Activated CD4-positive, alpha-beta T cell treated with anti-CD3 and anti-CD28 coated beads for 36 hours (primary cell): ENCODE measurements at regions of chr11 and their contacts with region 1.

Region 1: DNA sequence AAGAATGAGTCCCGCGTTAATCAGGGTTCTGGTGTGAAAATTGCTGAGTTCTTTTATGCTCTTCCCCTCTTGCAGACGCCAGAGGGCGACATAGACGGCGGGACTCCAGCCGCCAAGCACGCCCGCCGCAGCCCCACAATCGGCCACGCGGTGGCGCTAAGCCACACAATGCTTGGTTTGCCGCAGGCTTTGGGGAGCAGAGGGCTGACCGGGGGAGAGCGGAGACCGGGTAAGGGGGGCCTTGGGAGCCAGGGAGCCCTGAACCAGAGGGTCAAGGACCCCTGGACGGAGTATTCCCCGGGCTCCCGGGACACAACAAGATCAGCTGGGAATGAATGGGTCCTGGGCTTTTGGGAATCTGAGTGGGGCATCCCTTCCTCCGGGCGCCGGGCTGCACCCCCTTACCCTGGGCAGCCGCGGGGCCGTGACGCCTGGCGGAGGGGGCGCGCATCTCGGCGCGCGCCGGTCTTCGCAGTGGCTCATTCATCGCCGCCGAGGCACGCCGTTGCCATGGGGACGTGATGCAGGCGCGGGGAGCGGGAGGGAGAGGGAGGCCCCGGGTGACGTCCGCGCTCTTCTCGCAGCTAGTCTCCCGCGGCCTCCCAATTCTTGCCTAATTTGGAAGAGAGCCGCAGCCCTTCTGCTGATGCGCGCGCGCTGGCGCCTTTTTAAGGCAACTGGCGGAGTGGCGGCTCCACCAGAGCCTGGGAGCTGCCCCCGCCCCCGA is 12.2 kb upstream of the NPAS4 start:
- DNase-seq: peak; percentile 97
- ATAC-seq: peak; percentile 86
- H3K4me3 Mint-ChIP-seq: peak overlapping the region; percentile 67
- H3K27ac Mint-ChIP-seq: no peak overlapping the region
- H3K4me1 Mint-ChIP-seq: peaks cover 2% of the 10 kb centered on the region
- H3K27me3 Mint-ChIP-seq: peaks cover 20% of the 10 kb centered on the region

Region 2: GRCh38 chr11:66421492-66422205 is 13.0 kb after region 1 on chr11:
- CTCF ChIA-PET with region 1: interaction called, 33 read pairs
- POLR2A ChIA-PET with region 1: interaction called, 5 read pairs
- intact Hi-C with region 1: loop called (anchors 1 kb)
- DNase-seq: peak; percentile 93
- ATAC-seq: peak; percentile 40
- H3K4me3 Mint-ChIP-seq: no peak overlapping the region
- H3K27ac Mint-ChIP-seq: no peak overlapping the region
- H3K4me1 Mint-ChIP-seq: peaks cover 30% of the 10 kb centered on the region
- H3K27me3 Mint-ChIP-seq: peaks cover 35% of the 10 kb centered on the region

Region 3: GRCh38 chr11:66429983-66430602 is 21.4 kb after region 1 on chr11:
- CTCF ChIA-PET with region 1: interaction called, 28 read pairs
- POLR2A ChIA-PET with region 1: no interaction called
- intact Hi-C with region 1: loop called (anchors 1 kb)
- DNase-seq: peak; percentile 91
- ATAC-seq: peak; percentile 97
- H3K4me3 Mint-ChIP-seq: no peak overlapping the region
- H3K27ac Mint-ChIP-seq: no peak overlapping the region
- H3K4me1 Mint-ChIP-seq: no peaks in the 10 kb centered on the region
- H3K27me3 Mint-ChIP-seq: no peaks in the 10 kb centered on the region

Region 4: GRCh38 chr11:66510271-66510989 is 101.8 kb after region 1 on chr11 and contains the start of gene BBS1:
- CTCF ChIA-PET with region 1: interaction called, 3 read pairs
- POLR2A ChIA-PET with region 1: no interaction called
- intact Hi-C with region 1: loop called in 1 of 2 experiments (anchors 1 kb)
- DNase-seq: peak; percentile 88
- ATAC-seq: peak; percentile 98
- H3K4me3 Mint-ChIP-seq: peak within 1 kb of the TSS; percentile 86
- H3K27ac Mint-ChIP-seq: peak within 1 kb of the TSS; percentile 48
- H3K4me1 Mint-ChIP-seq: peaks cover 10% of the 10 kb centered on the region
- H3K27me3 Mint-ChIP-seq: no peaks in the 10 kb centered on the region
- total RNA-seq, gene BBS1: 9.4 to 10.7 TPM

Region 5: DNA sequence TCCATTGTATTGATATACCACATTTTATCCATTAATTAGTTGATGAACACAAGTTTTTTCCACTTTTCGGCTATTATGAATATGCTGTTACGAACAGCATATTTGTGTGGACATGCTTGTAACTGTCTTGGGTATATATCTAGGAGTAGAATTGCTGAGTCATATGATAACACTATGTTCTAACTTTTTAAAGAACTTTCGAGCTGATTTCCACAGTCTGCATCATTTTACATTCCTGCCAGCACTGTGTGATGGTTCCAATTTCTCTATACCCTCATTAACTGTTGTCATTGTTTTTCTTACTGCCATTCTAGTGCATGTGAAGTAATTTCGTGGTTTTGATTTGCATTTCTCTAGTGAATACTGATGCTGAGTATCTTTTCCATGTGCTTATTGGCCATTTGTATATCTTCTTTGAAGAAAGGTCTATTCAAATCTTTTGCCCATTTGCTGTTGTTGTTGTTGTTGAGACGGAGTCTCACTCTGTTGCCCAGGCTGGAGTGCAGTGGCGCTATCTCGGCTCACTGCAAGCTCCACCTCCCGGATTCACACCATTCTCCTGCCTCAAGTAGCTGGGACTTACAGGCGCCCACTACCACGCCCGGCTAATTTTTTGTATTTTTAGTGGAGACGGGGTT is 427.2 kb after region 1 on chr11:
- CTCF ChIA-PET with region 1: no interaction called
- POLR2A ChIA-PET with region 1: no interaction called
- intact Hi-C with region 1: loop called in 1 of 2 experiments (anchors 1 kb)
- DNase-seq: no peak
- ATAC-seq: no peak
- H3K4me3 Mint-ChIP-seq: no peak overlapping the region
- H3K27ac Mint-ChIP-seq: peak overlapping the region; percentile 6
- H3K4me1 Mint-ChIP-seq: peaks cover 20% of the 10 kb centered on the region
- H3K27me3 Mint-ChIP-seq: no peaks in the 10 kb centered on the region